Activated CD8-positive, alpha-beta memory T cell treated with anti-CD3 and anti-CD28 coated beads, Interleukin-2, amount 10 ng/mL, durations not matched to agents 7 days and 5 days (primary cell): ENCODE measurements at regions of chr1 and their contacts with region 1.

Region 1: DNA sequence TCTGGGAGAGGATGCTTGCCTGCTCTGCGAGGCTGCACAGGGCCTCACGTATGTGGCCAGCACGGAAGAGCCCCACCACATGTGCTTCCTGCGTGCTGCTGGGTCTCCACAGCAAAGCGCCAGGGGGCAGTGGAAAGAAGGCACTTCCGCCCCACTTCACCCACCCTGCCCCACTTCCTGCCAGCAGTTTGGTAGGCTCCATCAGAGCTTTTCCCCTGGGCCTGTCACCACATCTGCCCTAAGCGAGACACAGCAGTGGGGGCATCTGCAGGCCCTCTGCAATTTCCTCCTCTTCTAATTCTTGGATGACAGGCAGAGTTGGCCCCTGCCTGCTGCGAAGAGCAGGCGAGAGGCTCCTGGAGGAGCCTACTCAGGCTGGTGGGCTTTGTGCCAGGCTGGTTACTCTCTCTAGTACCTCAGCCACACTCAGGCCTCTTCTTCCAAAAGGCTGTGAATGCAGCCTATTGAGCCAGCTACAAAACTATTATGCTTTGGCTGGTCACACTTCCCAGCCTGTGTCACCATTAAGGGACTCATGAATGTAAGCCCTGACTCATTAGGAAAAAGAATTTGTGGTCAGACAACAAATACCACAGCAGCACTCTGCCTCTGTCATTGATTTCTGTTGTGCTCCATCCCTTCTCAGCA is 25.0 kb downstream of the CD244 start:
- DNase-seq: peak; percentile 96
- ATAC-seq: peak; percentile 91
- H3K4me3 Mint-ChIP-seq: peak overlapping the region; percentile 30
- H3K27ac Mint-ChIP-seq: peak overlapping the region; percentile 98
- H3K4me1 Mint-ChIP-seq: peaks cover 69% of the 10 kb centered on the region
- H3K27me3 Mint-ChIP-seq: no peaks in the 10 kb centered on the region

Region 2: GRCh38 chr1:160726498-160727315 is 111.0 kb before region 1 on chr1:
- CTCF ChIA-PET with region 1: interaction called, 38 read pairs
- DNase-seq: peak; percentile 83
- ATAC-seq: peak; percentile 75
- H3K4me3 Mint-ChIP-seq: no peak overlapping the region
- H3K27ac Mint-ChIP-seq: no peak overlapping the region
- H3K4me1 Mint-ChIP-seq: peaks cover 24% of the 10 kb centered on the region
- H3K27me3 Mint-ChIP-seq: no peaks in the 10 kb centered on the region

Region 3: GRCh38 chr1:160795951-160796383 is 41.7 kb before region 1 on chr1 and contains the start of gene LY9:
- CTCF ChIA-PET with region 1: interaction called, 53 read pairs
- DNase-seq: peak; percentile 93
- ATAC-seq: peak; percentile 92
- H3K4me3 Mint-ChIP-seq: peak within 1 kb of the TSS; percentile 74
- H3K27ac Mint-ChIP-seq: peak within 1 kb of the TSS; percentile 89
- H3K4me1 Mint-ChIP-seq: peaks cover 59% of the 10 kb centered on the region
- H3K27me3 Mint-ChIP-seq: peaks cover 27% of the 10 kb centered on the region
- total RNA-seq, gene LY9: 1.3 to 8.0 TPM

Region 4: GRCh38 chr1:160862203-160863060 is 24.8 kb after region 1 on chr1 and contains the start of gene CD244:
- CTCF ChIA-PET with region 1: interaction called, 85 read pairs
- DNase-seq: peak; percentile 95
- ATAC-seq: peak; percentile 92
- H3K4me3 Mint-ChIP-seq: peak within 1 kb of the TSS; percentile 89
- H3K27ac Mint-ChIP-seq: peak within 1 kb of the TSS; percentile 90
- H3K4me1 Mint-ChIP-seq: peaks cover 53% of the 10 kb centered on the region
- H3K27me3 Mint-ChIP-seq: no peaks in the 10 kb centered on the region
- total RNA-seq, gene CD244: 25.6 to 34.5 TPM

Region 5: DNA sequence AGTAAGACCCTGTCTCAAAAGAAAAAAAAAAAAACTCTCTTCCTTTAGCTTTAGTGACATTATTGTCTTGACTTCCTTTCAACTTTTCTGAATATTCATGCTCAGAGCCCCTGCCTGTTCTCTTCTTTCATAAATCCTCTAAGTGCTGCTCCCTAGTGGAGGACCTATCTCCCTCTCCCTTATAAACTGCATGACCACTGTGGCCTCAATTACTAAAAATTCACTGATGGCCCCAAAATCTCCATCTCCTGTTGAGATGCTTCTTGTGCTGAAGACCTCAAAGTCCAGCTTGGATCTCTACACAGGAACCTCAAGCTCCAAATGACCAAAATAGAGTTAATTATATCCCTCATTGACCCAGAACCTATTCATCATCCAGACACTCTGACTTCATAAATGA is 39.5 kb after region 1 on chr1:
- CTCF ChIA-PET with region 1: interaction called, 86 read pairs
- DNase-seq: no peak
- ATAC-seq: peak; percentile 76
- H3K4me3 Mint-ChIP-seq: no peak overlapping the region
- H3K27ac Mint-ChIP-seq: peak overlapping the region; percentile 45
- H3K4me1 Mint-ChIP-seq: peaks cover 26% of the 10 kb centered on the region
- H3K27me3 Mint-ChIP-seq: no peaks in the 10 kb centered on the region

Region 6: GRCh38 chr1:160951443-160952128 is 113.9 kb after region 1 on chr1:
- CTCF ChIA-PET with region 1: interaction called, 270 read pairs
- DNase-seq: peak; percentile 83
- ATAC-seq: peak; percentile 92
- H3K4me3 Mint-ChIP-seq: no peak overlapping the region
- H3K27ac Mint-ChIP-seq: no peak overlapping the region
- H3K4me1 Mint-ChIP-seq: peaks cover 4% of the 10 kb centered on the region
- H3K27me3 Mint-ChIP-seq: no peaks in the 10 kb centered on the region